A549 (cell line): ENCODE measurements at regions of chr15 and their contacts with region 1.

Region 1: DNA sequence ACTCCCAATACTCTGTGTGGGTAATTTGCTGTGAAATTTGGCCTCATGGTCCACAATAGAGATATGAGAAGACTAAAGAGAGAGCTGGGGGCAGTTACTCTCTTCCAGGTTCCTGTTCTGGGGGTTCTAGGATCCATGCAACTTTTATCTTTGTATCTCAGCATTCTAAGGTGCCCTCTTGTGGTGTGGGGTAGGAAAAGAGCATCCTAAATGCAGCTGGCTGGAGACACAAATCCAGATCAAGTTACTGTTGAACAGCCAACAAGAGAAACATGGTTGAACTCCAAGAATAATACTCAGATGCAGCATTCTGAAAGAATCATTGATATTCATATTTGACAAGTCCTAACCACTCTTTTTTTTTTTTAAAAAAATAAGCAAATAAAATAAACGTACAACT is 238.2 kb downstream of the GREM1 start:
- DNase-seq: peak; percentile 55 to 77
- ATAC-seq: peak; percentile 80 to 87; a peak in 5 of 6 replicates
- H3K4me3 ChIP-seq: no peak overlapping the region
- H3K27ac ChIP-seq: peak overlapping the region; percentile 6 to 27; a peak in 2 of 6 replicates
- H3K4me1 ChIP-seq: peaks cover 17% of the 10 kb centered on the region; the same call in 2 of the 3 replicates
- CTCF ChIP-seq: peak; percentile 84
- EP300 ChIP-seq: no peak
- POLR2A ChIP-seq: no peak
- RAD21 ChIP-seq: peak; percentile 90 to 91

Region 2: GRCh38 chr15:32651229-32651837 is 304.7 kb before region 1 on chr15:
- CTCF ChIA-PET with region 1: interaction called, 167 read pairs
- POLR2A ChIA-PET with region 1: no interaction called
- DNase-seq: peak; percentile 76 to 80
- ATAC-seq: peak; percentile 92 to 96
- H3K4me3 ChIP-seq: no peak overlapping the region
- H3K27ac ChIP-seq: peak overlapping the region in 1 of 2 experiments; percentile 9; a peak in 2 of 6 replicates
- H3K4me1 ChIP-seq: peaks cover 7% of the 10 kb centered on the region; the same call in 1 of the 3 replicates
- CTCF ChIP-seq: peak; percentile 88
- EP300 ChIP-seq: no peak
- POLR2A ChIP-seq: no peak
- RAD21 ChIP-seq: peak; percentile 88 to 92

Region 3: GRCh38 chr15:32824777-32825176 is 131.2 kb before region 1 on chr15:
- CTCF ChIA-PET with region 1: interaction called, 18 read pairs
- POLR2A ChIA-PET with region 1: no interaction called
- DNase-seq: peak; percentile 80 to 89
- ATAC-seq: peak; percentile 81 to 86
- H3K4me3 ChIP-seq: no peak overlapping the region; the same call in 2 of the 3 replicates
- H3K27ac ChIP-seq: peak overlapping the region; percentile 79 to 86
- H3K4me1 ChIP-seq: peaks cover 70% of the 10 kb centered on the region
- CTCF ChIP-seq: peak; percentile 41
- EP300 ChIP-seq: peak; percentile 80 to 84; a peak in 4 of 5 replicates
- POLR2A ChIP-seq: no peak
- RAD21 ChIP-seq: peak; percentile 72 to 83

Region 4: GRCh38 chr15:32838820-32839219 is 117.2 kb before region 1 on chr15:
- CTCF ChIA-PET with region 1: interaction called, 90 read pairs
- POLR2A ChIA-PET with region 1: no interaction called
- DNase-seq: peak; percentile 29 to 81
- ATAC-seq: peak; percentile 65 to 87; a peak in 5 of 6 replicates
- H3K4me3 ChIP-seq: no peak overlapping the region
- H3K27ac ChIP-seq: peak overlapping the region; percentile 59 to 73
- H3K4me1 ChIP-seq: peaks cover 30% of the 10 kb centered on the region
- CTCF ChIP-seq: no peak
- EP300 ChIP-seq: no peak
- POLR2A ChIP-seq: no peak
- RAD21 ChIP-seq: 0 out of 5 replicates have a peak, but pooled peaks of 1 of the 2 experiments have one; percentile 12

Region 5: DNA sequence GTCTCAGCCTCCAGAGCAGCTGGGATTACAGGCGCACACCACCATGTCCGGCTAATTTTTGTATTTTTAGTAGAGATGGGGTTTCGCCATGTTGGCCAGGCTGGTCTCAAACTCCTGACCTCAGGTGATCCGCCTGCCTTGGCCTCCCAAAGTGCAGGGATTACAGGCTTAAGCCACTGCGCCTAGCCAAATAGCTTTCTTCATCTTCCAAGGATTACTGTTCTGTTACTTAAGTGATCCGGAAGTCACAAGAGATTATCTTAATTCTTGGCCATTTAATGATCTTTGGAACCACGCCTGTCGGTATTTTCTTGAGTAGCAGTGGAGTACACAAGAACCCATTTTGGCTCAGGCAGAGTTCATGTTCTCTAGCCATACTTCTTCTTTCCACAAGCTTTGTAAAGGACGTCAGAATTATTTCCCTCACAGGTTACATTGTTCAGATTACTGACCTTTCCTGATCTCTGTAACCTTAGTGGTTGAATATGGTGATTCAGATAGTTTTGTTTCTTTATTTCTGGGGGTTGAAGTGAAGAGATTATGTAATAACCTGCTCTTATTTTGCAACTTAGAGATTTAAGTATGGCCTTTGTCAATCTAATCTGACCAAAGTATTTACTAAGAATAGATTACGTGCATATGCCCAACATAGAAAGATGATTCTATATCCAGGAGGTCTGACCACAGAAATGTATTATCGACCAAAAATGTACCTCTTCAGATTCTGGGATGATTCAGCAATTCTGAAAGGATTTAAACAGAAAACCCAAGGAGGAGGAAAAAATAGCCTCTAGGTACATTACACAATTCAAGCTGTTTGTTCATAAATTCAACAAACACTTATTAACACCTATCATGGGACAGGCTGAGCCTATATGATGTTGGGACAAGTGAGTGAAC is 106.0 kb before region 1 on chr15:
- CTCF ChIA-PET with region 1: interaction called, 90 read pairs
- POLR2A ChIA-PET with region 1: no interaction called
- DNase-seq: peak; percentile 59 to 87
- ATAC-seq: peak; percentile 78 to 83
- H3K4me3 ChIP-seq: no peak overlapping the region
- H3K27ac ChIP-seq: peak overlapping the region; percentile 79 to 86
- H3K4me1 ChIP-seq: peaks cover 56% of the 10 kb centered on the region
- CTCF ChIP-seq: no peak
- EP300 ChIP-seq: peak; percentile 96 to 97
- POLR2A ChIP-seq: no peak
- RAD21 ChIP-seq: peak; percentile 14 to 71; a peak in 3 of 5 replicates

Region 6: GRCh38 chr15:32936283-32936918 is 19.6 kb before region 1 on chr15:
- CTCF ChIA-PET with region 1: interaction called, 15 read pairs
- POLR2A ChIA-PET with region 1: no interaction called
- DNase-seq: peak; percentile 20 to 52
- ATAC-seq: peak; percentile 39 to 76; a peak in 3 of 6 replicates
- H3K4me3 ChIP-seq: no peak overlapping the region
- H3K27ac ChIP-seq: no peak overlapping the region
- H3K4me1 ChIP-seq: no peaks in the 10 kb centered on the region
- CTCF ChIP-seq: peak; percentile 34; the same call in 2 of the 3 replicates
- EP300 ChIP-seq: no peak
- POLR2A ChIP-seq: no peak
- RAD21 ChIP-seq: peak in 1 of 2 experiments; percentile 53; a peak in 2 of 5 replicates

Region 7: DNA sequence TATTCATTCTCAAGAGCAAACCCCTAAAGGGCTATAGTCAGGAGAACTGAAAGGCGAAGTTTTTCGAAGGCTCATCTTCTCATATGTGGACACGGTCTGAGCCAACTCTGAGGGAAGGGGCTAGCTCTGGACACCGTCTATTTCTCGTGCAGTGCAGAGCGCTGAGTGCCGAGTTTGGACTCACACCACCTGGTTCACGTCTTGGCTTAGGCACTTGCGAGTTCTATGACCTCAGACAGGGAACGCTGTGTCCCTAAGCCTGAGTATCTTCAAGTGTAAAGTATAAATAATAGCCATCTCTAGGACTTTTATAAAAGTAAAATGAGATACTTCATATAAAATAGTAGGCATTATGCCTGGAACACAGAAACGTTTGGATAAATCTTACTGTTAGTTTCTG is 14.8 kb after region 1 on chr15:
- CTCF ChIA-PET with region 1: interaction called, 23 read pairs
- POLR2A ChIA-PET with region 1: no interaction called
- DNase-seq: no peak
- ATAC-seq: no peak
- H3K4me3 ChIP-seq: no peak overlapping the region
- H3K27ac ChIP-seq: no peak overlapping the region
- H3K4me1 ChIP-seq: no peaks in the 10 kb centered on the region
- CTCF ChIP-seq: no peak
- EP300 ChIP-seq: no peak
- POLR2A ChIP-seq: no peak
- RAD21 ChIP-seq: no peak

Region 8: GRCh38 chr15:33159726-33160453 is 203.9 kb after region 1 on chr15:
- CTCF ChIA-PET with region 1: no interaction called
- POLR2A ChIA-PET with region 1: no interaction called
- DNase-seq: peak in 1 of 2 experiments; percentile 20
- ATAC-seq: peak; percentile 64 to 75; a peak in 4 of 6 replicates
- H3K4me3 ChIP-seq: no peak overlapping the region
- H3K27ac ChIP-seq: no peak overlapping the region
- H3K4me1 ChIP-seq: no peaks in the 10 kb centered on the region
- CTCF ChIP-seq: no peak
- EP300 ChIP-seq: no peak
- POLR2A ChIP-seq: no peak
- RAD21 ChIP-seq: no peak